Activated T-helper 1 cell treated with anti-CD3 and anti-CD28 coated beads, Interleukin-12 subunit alpha, Interleukin-12 subunit beta, Interleukin-2, Interleukin-4 antibody, amounts not matched to agents 30 ng/mL and 10 ng/mL and 1 ng/mL, durations not matched to agents 14 hours and 24 hours and 36 hours (primary cell): ENCODE measurements at regions of chr3 and their contacts with region 1.

Region 1: DNA sequence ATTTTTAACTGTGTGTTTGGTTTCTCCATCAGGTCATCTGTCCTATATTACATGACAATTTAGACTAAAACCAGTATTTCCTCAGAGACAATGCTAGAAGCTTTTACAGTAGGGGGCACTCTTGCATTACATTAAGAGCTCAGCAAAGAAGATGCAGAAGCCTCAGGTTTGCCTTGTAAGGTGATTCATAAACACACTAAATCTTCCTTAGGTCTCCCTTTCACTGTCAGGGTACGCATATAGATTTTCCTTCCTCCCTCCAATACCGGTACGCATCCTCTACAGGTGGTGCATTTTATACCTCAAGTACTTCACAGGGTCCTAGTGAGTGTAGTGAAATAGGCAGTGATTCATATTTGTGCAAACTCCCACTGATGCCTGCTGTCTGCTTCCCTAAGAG is 46.5 kb downstream of the CD86 start:
- DNase-seq: no peak
- H3K4me3 Mint-ChIP-seq: peak overlapping the region; percentile 47
- H3K27ac Mint-ChIP-seq: peak overlapping the region; percentile 87
- H3K4me1 Mint-ChIP-seq: no peaks in the 10 kb centered on the region
- H3K27me3 Mint-ChIP-seq: no peaks in the 10 kb centered on the region

Region 2: DNA sequence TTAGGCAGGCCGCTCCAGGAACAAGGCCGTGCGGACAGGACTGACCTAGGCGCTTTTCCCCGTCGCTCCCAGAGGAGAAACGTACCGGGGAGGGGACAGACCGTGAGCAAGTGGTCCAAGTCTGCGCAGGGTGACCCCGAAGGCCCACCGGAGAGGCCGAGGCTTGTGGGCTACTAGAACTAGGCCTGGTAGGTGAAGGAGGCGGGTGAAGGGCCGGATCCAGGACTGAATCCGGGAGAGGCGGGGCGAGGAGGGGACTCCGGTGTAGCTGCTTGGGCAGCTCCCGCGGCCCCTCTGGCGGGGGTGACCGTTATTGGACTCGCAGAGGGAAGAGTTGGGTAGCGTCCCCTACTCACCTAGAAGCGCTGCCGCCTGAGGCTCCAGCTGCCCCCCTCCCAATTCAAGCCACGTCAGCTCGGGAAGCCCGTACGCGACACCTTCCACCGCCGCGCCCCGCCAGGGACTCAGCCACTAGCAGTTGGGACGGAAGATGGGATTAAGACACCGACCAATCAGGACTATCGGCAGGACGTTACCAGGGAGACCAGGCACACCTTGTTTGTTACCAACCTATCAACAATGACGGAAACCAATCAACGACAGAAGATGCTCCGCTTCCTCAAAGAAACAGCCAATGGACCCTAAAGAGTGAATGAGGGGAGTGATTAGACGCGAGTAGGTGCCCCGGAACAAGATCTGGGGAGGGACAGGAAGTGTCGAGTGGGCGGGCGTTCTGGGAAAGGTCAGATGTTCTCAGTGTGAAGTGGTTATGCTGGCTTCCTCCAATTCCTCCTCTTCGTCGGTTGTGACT is 352.2 kb before region 1 on chr3 and contains the start of gene GOLGB1:
- intact Hi-C with region 1: loop called (anchors 2 kb)
- DNase-seq: peak; percentile 89
- H3K4me3 Mint-ChIP-seq: no peak within 1 kb of the TSS
- H3K27ac Mint-ChIP-seq: no peak within 1 kb of the TSS
- H3K4me1 Mint-ChIP-seq: peaks cover 5% of the 10 kb centered on the region
- H3K27me3 Mint-ChIP-seq: peaks cover 12% of the 10 kb centered on the region
- total RNA-seq, gene GOLGB1: 23.2 and 23.6 TPM in 2 replicates

Region 3: DNA sequence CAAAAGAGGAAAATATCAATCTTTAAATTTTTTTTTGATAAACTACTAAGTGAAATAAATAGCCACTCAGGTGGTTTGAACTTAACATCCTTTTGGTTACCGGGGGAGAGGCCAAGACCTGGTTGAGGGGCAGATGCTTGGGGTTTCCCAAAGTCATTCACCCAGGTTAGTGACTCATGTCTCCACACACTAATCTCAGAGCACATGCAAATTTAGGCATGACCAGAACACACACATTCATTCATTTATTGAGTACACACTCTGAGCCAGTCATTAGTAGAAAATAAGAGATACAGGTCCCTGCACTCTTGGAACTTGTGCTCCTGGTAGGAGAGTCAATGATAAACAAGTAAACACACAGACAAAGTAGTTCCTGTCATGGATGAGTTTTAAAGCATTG is 86.9 kb before region 1 on chr3:
- intact Hi-C with region 1: loop called (anchors 2 kb)
- DNase-seq: no peak
- H3K4me3 Mint-ChIP-seq: no peak overlapping the region
- H3K27ac Mint-ChIP-seq: peak overlapping the region; percentile 21
- H3K4me1 Mint-ChIP-seq: peaks cover 40% of the 10 kb centered on the region
- H3K27me3 Mint-ChIP-seq: peaks cover 12% of the 10 kb centered on the region

Region 4: GRCh38 chr3:122146466-122146865 is 44.8 kb after region 1 on chr3:
- intact Hi-C with region 1: loop called (anchors 1 kb)
- DNase-seq: peak; percentile 62
- H3K4me3 Mint-ChIP-seq: peak overlapping the region; percentile 0
- H3K27ac Mint-ChIP-seq: peak overlapping the region; percentile 69
- H3K4me1 Mint-ChIP-seq: peaks cover 23% of the 10 kb centered on the region
- H3K27me3 Mint-ChIP-seq: peaks cover 2% of the 10 kb centered on the region

Region 5: GRCh38 chr3:122356415-122356814 is 254.8 kb after region 1 on chr3:
- intact Hi-C with region 1: loop called (anchors 2 kb)
- DNase-seq: peak; percentile 11
- H3K4me3 Mint-ChIP-seq: no peak overlapping the region
- H3K27ac Mint-ChIP-seq: no peak overlapping the region
- H3K4me1 Mint-ChIP-seq: peaks cover 14% of the 10 kb centered on the region
- H3K27me3 Mint-ChIP-seq: no peaks in the 10 kb centered on the region

Region 6: GRCh38 chr3:122484985-122485384 is 383.3 kb after region 1 on chr3:
- intact Hi-C with region 1: loop called (anchors 10 kb)
- DNase-seq: no peak
- H3K4me3 Mint-ChIP-seq: no peak overlapping the region
- H3K27ac Mint-ChIP-seq: no peak overlapping the region
- H3K4me1 Mint-ChIP-seq: peaks cover 48% of the 10 kb centered on the region
- H3K27me3 Mint-ChIP-seq: no peaks in the 10 kb centered on the region